CD14-positive monocyte (primary cell): ENCODE measurements at regions of chr13 and their contacts with region 1.

Region 1: GRCh38 chr13:46492946-46493345 is 60.0 kb upstream of the LRCH1 start:
- DNase-seq: peak; percentile 9 to 17 (median 14)
- H3K4me3 ChIP-seq: no peak overlapping the region
- H3K4me3 Mint-ChIP-seq: no peak overlapping the region
- H3K27ac ChIP-seq: no peak overlapping the region
- H3K27ac Mint-ChIP-seq: no peak overlapping the region
- H3K4me1 ChIP-seq: peaks cover 3 to 12% of the 10 kb centered on the region in 2 donors
- H3K4me1 Mint-ChIP-seq: peaks cover 12% of the 10 kb centered on the region
- H3K27me3 ChIP-seq: no peaks in the 10 kb centered on the region
- H3K27me3 Mint-ChIP-seq: peaks cover 0 to 5% (median 0%) of the 10 kb centered on the region in 3 donors
- CTCF ChIP-seq: peak; percentile 79

Region 2: DNA sequence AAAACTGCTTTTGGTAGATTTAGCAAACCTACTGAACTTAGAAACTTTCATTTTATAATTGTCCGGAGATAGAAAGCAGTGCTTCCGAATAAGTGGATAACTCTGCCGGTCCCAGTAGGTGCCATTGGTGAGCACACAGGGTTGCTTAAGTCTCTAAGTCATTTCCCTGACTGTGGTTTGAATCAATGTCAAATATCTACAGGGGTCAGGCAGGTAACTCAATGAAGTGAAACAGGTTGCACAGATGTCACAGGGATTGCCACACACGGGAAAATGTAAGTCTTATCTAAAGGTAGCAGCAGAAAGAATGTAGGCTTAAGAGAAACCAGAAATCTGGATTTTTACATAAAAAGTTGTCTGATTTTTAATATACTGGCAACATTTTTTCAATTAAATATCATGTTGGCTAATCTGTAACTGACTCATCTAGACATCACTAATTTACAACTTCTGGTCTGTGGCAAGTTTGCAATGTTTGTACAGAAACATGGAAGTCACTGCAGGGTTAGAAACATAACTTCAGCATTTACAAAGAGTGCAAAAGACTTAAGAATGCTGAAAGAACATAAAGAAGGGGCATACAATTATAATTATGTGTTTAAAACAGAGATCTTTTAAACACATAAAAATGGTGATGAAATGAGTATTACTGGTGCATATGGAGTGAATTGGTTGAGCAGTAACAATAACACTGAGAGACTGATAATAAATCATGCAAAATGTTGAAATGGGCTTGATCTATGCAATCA is 295.5 kb before region 1 on chr13:
- intact Hi-C with region 1: no loop called
- DNase-seq: peak in 2 of 3 donors; percentile 53 to 59
- H3K4me3 ChIP-seq: no peak overlapping the region
- H3K4me3 Mint-ChIP-seq: no peak overlapping the region
- H3K27ac ChIP-seq: peak overlapping the region in 1 of 2 donors; percentile 43
- H3K27ac Mint-ChIP-seq: no peak overlapping the region
- H3K4me1 ChIP-seq: peaks cover 54 to 64% of the 10 kb centered on the region in 2 donors
- H3K4me1 Mint-ChIP-seq: peaks cover 39% of the 10 kb centered on the region
- H3K27me3 ChIP-seq: no peaks in the 10 kb centered on the region
- H3K27me3 Mint-ChIP-seq: peaks cover 0 to 4% (median 1%) of the 10 kb centered on the region in 3 donors
- CTCF ChIP-seq: no peak

Region 3: DNA sequence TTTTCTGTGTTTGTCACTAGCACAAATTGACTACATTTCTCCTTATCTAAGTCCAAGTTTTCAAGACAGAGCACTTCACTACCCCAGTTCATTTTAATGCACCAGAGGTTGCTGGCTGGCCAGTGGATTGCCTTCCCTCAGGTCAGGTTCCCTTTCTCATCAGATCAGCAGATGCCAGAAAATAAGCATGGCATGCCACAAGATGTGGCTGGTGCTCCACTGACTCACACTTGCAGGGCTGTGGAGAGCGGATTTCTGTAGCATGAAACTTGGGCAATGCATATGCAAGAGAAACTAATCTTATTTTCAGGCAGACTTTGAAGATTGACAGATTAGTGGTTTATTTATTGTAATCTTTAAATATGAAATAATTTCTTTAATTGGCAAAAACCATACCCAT is 185.4 kb before region 1 on chr13:
- intact Hi-C with region 1: no loop called
- DNase-seq: peak in 1 of 3 donors; percentile 50
- H3K4me3 ChIP-seq: no peak overlapping the region
- H3K4me3 Mint-ChIP-seq: no peak overlapping the region
- H3K27ac ChIP-seq: no peak overlapping the region
- H3K27ac Mint-ChIP-seq: peak overlapping the region in 1 of 7 donors; percentile 37
- H3K4me1 ChIP-seq: peaks cover 26% of the 10 kb centered on the region in 2 donors
- H3K4me1 Mint-ChIP-seq: peaks cover 38% of the 10 kb centered on the region
- H3K27me3 ChIP-seq: no peaks in the 10 kb centered on the region
- H3K27me3 Mint-ChIP-seq: peaks cover 0 to 4% (median 0%) of the 10 kb centered on the region in 3 donors
- CTCF ChIP-seq: no peak

Region 4: GRCh38 chr13:46721054-46721453 is 228.1 kb after region 1 on chr13:
- intact Hi-C with region 1: loop called (anchors 5 to 10 kb)
- DNase-seq: peak in 2 of 3 donors; percentile 26 to 28
- H3K4me3 ChIP-seq: no peak overlapping the region
- H3K4me3 Mint-ChIP-seq: no peak overlapping the region
- H3K27ac ChIP-seq: no peak overlapping the region
- H3K27ac Mint-ChIP-seq: no peak overlapping the region
- H3K4me1 ChIP-seq: peaks cover 0 to 4% of the 10 kb centered on the region in 2 donors
- H3K4me1 Mint-ChIP-seq: peaks cover 14% of the 10 kb centered on the region
- H3K27me3 ChIP-seq: no peaks in the 10 kb centered on the region
- H3K27me3 Mint-ChIP-seq: peaks cover 0 to 2% (median 0%) of the 10 kb centered on the region in 3 donors
- CTCF ChIP-seq: peak; percentile 76